ENCODE measurements at regions of chr9 and their contacts with region 1.

Region 1: GRCh38 chr9:72592502-72593403 is 71.3 kb downstream of the TMC1 start:
- DNase-seq: peak; percentile 51
- H3K4me3 ChIP-seq: no peak overlapping the region
- H3K27ac ChIP-seq: no peak overlapping the region
- H3K4me1 ChIP-seq: no peaks in the 10 kb centered on the region
- H3K27me3 ChIP-seq: no peaks in the 10 kb centered on the region
- CTCF ChIP-seq: peak; percentile 85

Region 2: DNA sequence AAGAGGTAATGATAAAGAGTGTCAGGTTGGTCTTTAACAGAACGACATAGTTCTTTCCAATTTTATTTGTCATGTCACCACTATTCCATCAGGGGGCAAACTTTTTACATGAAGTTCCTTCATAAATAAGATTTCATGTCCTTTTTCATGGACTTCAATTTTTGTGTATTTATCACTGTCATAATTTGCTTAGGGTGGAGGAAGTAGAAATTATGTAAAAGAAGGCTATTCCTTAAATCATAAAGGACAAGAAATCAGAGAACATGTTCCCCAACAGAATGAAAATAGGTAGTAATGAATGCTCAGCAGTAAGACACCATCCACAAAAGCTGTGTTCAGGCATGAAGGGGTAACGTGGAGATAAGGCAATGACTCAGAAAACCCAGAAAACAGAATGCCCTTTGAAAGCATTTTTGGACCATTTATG is 300.5 kb before region 1 on chr9:
- intact Hi-C with region 1: loop called (anchors 5 kb)
- DNase-seq: no peak
- H3K4me3 ChIP-seq: no peak overlapping the region
- H3K27ac ChIP-seq: peak overlapping the region; percentile 70
- H3K4me1 ChIP-seq: no peaks in the 10 kb centered on the region
- H3K27me3 ChIP-seq: no peaks in the 10 kb centered on the region
- CTCF ChIP-seq: peak; percentile 54

Region 3: DNA sequence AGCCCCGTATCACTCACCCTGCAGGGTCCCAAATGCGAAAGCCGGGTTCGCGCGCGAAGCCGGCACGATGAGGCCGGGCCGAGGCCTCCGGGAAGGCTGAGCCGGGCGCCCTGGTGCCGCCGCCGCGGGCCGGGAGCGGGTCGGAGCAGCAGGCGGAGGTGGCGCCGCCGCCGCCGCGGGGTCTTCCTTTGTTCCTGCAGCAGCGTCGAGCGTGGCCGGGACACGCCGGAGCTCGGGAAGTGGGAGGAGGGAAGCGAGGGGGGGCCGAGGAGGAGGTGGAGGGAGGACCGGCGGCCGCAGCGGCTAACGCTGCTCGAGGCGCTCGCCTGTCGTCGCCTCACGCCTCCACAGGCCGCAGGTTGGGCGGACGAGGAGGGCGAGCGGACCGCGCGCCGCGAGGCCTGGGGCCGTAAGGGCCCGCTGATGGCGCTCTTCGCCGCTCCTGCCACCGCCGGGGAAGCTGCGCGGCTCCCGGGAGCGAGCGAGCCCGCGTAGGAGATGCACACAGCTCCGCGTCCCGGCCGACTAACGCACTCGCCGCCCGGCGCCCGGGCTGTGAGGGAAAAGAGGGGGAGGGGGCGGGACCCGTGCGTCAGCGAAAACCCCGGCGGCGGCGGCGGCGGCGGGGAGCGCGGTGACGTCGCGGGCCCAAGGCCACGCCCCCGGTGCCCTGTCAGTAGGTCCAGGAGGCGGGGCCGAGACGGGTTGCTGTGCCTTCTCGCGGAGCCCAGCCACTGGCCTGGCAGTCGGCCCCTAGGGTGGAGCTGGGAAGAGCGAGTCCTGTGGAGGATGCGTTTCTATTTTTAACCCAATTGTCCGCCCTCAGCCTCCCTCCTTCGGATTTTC is 227.9 kb before region 1 on chr9 and contains the start of gene ZFAND5:
- intact Hi-C with region 1: loop called (anchors 5 kb)
- DNase-seq: peak; percentile 97
- H3K4me3 ChIP-seq: peak within 1 kb of the TSS; percentile 79
- H3K27ac ChIP-seq: peak within 1 kb of the TSS; percentile 100
- H3K4me1 ChIP-seq: peaks cover 6% of the 10 kb centered on the region
- H3K27me3 ChIP-seq: no peaks in the 10 kb centered on the region
- CTCF ChIP-seq: no peak
- total RNA-seq, gene ZFAND5: 86.9 to 164 TPM

Region 4: DNA sequence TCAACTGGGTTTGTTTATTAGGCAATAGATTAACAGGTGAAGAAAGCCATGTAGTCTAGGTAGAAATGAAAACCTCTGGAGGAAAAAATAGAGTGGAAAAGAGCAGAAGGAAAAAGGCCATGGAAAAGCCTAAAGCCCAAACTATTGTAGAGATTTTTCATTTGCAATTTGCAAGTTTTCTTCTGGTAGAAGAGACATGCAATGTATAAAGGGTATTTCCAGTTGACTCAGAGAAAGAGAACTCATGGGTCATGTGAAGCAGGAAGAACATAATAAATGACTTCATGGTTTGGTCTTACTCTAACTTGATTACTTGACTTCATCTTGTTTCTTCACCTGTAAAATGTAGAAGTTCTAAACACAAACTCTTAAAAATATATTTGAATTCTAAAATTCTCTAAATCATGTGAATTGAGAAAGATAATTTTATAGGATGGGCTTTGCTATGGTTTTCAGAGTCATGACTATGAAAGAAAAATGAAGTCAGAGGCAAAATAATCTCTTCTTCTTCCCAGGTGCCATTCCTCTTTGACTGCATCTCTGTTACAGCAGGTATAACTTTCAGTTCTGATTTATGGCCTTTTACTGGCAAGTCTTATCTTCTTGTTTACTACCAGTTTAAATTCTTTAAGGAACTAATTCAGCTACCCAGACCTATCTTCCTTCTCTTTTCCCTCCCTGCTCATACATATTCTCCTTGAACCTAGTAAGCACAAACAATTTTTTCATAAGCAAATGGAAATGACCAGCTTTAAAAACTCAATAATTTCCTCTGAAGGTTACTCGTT is 119.1 kb before region 1 on chr9:
- intact Hi-C with region 1: loop called (anchors 10 kb)
- DNase-seq: no peak
- H3K4me3 ChIP-seq: no peak overlapping the region
- H3K27ac ChIP-seq: peak overlapping the region; percentile 70
- H3K4me1 ChIP-seq: peaks cover 18% of the 10 kb centered on the region
- H3K27me3 ChIP-seq: no peaks in the 10 kb centered on the region
- CTCF ChIP-seq: no peak

Region 5: DNA sequence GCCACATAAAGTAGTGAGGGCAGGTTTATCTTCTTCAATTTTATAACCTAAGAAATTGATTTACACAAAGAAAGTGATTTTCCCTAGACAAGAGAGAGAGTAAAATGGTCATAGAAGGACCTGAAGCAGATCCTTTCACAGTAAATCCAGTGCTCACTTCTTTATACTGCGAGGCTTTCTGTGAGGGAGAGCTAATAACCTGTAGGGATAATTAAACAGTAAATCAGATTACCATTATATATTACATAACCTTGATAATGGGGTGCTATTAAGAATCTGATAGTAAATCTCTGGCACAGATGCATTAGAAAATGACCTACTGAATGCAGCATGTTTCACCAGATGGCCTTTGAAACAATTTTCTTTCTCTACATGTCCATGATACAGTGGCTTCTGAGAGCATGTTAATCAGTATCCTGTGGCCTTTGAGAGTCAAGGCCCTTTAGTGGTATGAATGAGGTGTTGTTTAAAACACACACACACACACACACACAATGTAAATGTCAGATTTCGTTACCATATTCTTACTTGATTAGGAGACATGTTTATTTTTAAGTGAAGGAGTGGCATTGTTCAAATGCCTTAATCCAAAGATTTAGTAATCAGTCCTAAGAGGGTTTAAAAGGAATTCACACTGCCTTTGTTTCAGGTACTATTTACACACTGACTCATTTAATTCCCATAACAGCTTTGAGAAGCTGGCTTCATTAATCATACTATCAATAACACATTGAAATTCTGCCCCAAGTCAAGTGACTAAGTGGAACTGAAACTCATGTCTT is 235.4 kb after region 1 on chr9:
- intact Hi-C with region 1: loop called (anchors 10 kb)
- DNase-seq: no peak
- H3K4me3 ChIP-seq: no peak overlapping the region
- H3K27ac ChIP-seq: no peak overlapping the region
- H3K4me1 ChIP-seq: no peaks in the 10 kb centered on the region
- H3K27me3 ChIP-seq: no peaks in the 10 kb centered on the region
- CTCF ChIP-seq: no peak

Measured in colonic mucosa (tissue), 4 donors.